ENCODE measurements at regions of chr7 and their contacts with region 1.

Region 1: DNA sequence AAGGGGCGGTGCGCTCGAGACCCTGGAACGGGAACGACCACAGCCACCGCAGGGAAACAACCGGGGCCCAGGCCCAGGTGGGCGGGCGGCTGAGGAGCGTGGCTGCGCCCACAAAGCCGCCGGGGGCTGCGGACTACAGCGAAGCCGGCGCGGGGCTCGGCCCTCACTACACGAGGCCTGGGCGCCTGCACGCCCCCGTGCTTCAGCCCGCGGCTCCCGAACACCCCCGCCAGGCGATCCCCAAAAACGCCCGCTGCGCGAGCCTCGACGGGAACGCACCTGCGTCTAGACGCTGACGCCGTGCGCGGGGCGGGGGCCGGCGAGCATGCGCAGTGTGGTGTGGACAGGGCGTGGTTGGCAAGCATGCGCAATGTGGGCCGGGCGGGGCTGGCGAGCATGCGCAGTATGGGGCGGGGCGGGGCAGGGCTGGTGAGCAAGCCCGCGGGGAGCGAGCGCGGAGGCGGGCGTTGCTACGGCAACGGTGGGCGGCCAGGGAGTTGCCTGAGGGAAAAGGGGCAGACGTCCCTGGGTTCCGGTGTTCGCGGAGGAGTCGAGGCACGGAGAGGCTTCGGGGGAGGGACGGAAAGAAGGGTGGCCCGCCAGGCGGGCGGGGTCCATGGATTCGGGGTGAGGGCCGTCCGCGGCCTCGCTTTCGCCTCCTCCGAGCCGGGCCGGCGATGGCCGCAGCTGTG is at the start of gene RNF32:
- DNase-seq: peak; percentile 86 to 99 (median 95)
- ATAC-seq: peak; percentile 82
- H3K4me3 ChIP-seq: peak within 1 kb of the TSS; percentile 61 to 93
- H3K4me3 Mint-ChIP-seq: peak within 1 kb of the TSS; percentile 84
- H3K27ac ChIP-seq: peak within 1 kb of the TSS; percentile 48 to 75
- H3K27ac Mint-ChIP-seq: peak within 1 kb of the TSS; percentile 83
- H3K4me1 ChIP-seq: peaks cover 7% of the 10 kb centered on the region
- H3K4me1 Mint-ChIP-seq: peaks cover 13% of the 10 kb centered on the region
- H3K27me3 ChIP-seq: no peaks in the 10 kb centered on the region
- H3K27me3 Mint-ChIP-seq: peaks cover 37% of the 10 kb centered on the region
- CTCF ChIP-seq: no peak
- total RNA-seq, gene RNF32: 0.33 to 0.46 TPM

Region 2: GRCh38 chr7:156612930-156613329 is 27.5 kb before region 1 on chr7:
- CTCF ChIA-PET with region 1: no interaction called
- POLR2A ChIA-PET with region 1: no interaction called
- intact Hi-C with region 1: loop called in 1 of 2 experiments (anchors 2 kb)
- DNase-seq: peak; percentile 42 to 90 (median 77)
- ATAC-seq: peak; percentile 99
- H3K4me3 ChIP-seq: no peak overlapping the region
- H3K4me3 Mint-ChIP-seq: no peak overlapping the region
- H3K27ac ChIP-seq: no peak overlapping the region
- H3K27ac Mint-ChIP-seq: peak overlapping the region; percentile 38
- H3K4me1 ChIP-seq: peaks cover 20% of the 10 kb centered on the region
- H3K4me1 Mint-ChIP-seq: peaks cover 32% of the 10 kb centered on the region
- H3K27me3 ChIP-seq: peaks cover 2 to 3% of the 10 kb centered on the region in 2 experiments
- H3K27me3 Mint-ChIP-seq: peaks cover 40% of the 10 kb centered on the region
- CTCF ChIP-seq: no peak

Region 3: GRCh38 chr7:156656598-156656997 is 16.2 kb after region 1 on chr7:
- CTCF ChIA-PET with region 1: no interaction called
- POLR2A ChIA-PET with region 1: no interaction called
- intact Hi-C with region 1: no loop called
- DNase-seq: no peak
- ATAC-seq: no peak
- H3K4me3 ChIP-seq: no peak overlapping the region
- H3K4me3 Mint-ChIP-seq: no peak overlapping the region
- H3K27ac ChIP-seq: no peak overlapping the region
- H3K27ac Mint-ChIP-seq: no peak overlapping the region
- H3K4me1 ChIP-seq: no peaks in the 10 kb centered on the region
- H3K4me1 Mint-ChIP-seq: no peaks in the 10 kb centered on the region
- H3K27me3 ChIP-seq: peaks cover 0 to 2% of the 10 kb centered on the region in 2 experiments
- H3K27me3 Mint-ChIP-seq: peaks cover 16% of the 10 kb centered on the region
- CTCF ChIP-seq: no peak

Region 4: DNA sequence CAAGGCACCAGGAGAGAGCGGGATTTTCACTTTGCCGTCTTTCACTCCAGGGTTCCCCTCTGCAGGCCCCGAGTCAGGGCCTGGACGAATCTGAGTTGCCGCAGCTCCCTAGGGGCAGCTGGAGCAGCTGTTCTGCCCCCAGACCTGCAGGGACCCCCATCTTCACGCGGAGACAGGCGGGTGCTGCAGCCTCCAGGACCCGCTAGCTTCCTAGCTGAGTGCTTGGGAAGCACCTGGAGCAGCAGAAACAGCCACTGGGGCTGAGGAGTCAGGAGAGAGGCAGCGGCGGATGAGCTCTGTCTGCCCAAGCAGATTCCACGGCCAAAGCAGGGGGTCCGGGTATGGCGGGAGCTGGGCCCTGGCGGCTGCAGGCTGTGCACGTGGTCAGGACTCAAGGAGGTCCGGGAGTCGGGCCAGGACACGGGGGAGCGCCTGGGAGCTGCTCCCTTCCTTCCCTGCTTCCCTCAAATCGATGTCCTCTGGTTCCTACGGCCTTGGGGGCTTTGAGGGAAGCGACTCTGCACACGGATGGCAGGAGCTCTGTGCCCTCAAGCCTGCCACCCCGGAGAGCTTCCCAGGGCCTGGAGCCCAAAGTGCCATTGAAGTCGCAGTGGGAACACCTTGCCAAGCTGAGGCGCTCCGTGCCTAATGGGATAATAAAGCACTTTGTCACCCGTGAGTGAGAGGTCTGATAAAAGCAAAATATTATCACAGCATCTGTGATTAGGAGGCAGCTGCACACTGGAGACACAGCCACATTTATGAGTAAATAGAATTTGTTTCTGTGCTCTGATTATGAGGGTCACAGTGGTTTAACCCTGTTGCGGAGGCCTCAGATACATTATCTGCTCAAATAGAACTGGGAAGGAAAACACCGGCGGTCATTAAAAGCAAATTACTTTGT is 352.9 kb after region 1 on chr7:
- CTCF ChIA-PET with region 1: no interaction called
- POLR2A ChIA-PET with region 1: no interaction called
- intact Hi-C with region 1: no loop called
- DNase-seq: no peak
- ATAC-seq: no peak
- H3K4me3 ChIP-seq: no peak overlapping the region
- H3K4me3 Mint-ChIP-seq: no peak overlapping the region
- H3K27ac ChIP-seq: no peak overlapping the region
- H3K27ac Mint-ChIP-seq: no peak overlapping the region
- H3K4me1 ChIP-seq: no peaks in the 10 kb centered on the region
- H3K4me1 Mint-ChIP-seq: no peaks in the 10 kb centered on the region
- H3K27me3 ChIP-seq: peaks cover 3 to 4% of the 10 kb centered on the region in 2 experiments
- H3K27me3 Mint-ChIP-seq: peaks cover 52% of the 10 kb centered on the region
- CTCF ChIP-seq: no peak

Measured in CD8-positive, alpha-beta T cell (primary cell).